ENCODE measurements at regions of chr19 and their contacts with region 1.

Region 1: GRCh38 chr19:12064590-12065538 is at the start of gene ZNF844:
- DNase-seq: peak; percentile 93
- CTCF ChIP-seq: no peak

Region 2: DNA sequence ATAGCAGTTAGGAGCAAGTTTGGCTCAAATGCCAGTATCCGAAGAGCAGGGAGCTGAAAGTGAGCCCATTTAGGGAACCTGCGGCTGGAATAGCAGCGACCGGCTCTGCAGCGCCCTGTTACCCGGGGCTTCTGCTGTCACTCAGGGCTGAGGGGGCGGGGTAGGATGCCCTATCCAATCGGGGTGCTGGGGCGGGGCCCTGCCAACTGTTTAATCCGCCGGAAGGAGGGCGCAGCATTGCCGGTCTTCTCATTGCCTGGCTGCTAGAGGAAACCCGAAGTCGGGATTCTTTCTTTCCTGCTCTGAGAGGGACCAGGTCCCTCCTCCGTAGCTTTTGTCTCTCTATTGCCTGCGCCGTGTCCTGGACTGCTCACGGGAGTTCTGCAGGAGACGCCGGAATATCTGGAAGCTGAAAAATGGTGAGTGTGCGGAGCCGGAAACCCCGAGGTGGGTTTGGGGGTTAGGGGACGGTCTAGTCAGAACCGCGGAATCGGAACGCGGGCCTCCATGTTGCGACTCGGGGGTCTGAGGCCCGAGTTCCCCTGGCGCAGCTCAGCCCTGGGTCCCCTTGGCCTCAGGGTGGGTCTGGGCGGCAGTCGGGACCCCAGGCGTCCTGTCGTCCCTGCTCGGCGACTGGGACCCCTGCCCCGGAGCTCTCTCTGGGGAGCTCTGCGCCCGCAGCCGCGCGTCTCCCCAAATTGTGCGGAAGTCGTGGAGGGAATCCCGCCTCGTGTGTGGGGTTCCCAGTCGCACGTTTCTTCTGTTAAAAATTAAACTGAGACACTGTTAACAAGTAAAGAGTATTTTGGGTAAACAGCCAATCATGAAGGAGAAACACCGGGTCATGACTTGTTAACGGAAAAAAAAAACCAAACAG is 77.2 kb before region 1 on chr19:
- CTCF ChIA-PET with region 1: interaction called, 12 read pairs
- POLR2A ChIA-PET with region 1: no interaction called
- DNase-seq: peak; percentile 92
- CTCF ChIP-seq: no peak

Region 3: DNA sequence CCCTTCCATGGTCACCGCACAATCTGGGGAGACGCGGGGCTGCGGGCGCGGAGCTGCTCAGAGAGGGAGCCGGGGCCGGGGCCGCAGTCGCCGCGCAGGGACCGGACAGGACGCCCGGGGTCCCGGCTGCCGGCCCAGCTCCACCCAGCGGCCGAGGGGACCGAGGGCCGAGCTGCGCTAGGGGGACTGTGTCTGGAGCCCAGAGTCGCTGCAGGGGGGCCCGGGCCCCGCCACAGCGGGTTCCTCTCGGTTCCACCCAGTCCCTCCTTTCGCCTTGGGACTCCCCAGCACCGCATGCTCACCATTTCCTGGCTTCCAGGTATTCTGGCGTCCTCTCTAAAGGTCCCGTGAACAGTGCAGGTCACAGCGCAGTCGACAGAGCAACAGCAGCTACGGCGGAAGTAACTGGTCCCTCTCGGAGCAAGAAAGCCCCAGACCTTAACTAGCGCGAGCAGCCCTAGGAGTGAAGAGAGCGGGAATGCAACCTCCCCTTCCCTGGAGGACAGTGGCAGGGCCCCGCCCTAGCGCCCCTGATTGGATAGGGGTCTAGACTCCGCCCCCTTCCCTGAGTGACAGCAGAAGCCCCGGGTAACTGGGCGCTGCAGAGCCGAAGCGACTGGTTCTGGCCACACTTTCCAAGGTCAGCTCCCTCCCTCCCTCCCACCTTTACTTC is 12.2 kb before region 1 on chr19 and contains the start of gene ZNF878:
- CTCF ChIA-PET with region 1: interaction called, 17 read pairs
- POLR2A ChIA-PET with region 1: interaction called, 3 read pairs
- DNase-seq: peak; percentile 87
- CTCF ChIP-seq: peak; percentile 35

Region 4: GRCh38 chr19:12092065-12092867 is 27.4 kb after region 1 on chr19:
- CTCF ChIA-PET with region 1: interaction called, 47 read pairs
- POLR2A ChIA-PET with region 1: no interaction called
- DNase-seq: peak; percentile 91
- CTCF ChIP-seq: no peak

Region 5: DNA sequence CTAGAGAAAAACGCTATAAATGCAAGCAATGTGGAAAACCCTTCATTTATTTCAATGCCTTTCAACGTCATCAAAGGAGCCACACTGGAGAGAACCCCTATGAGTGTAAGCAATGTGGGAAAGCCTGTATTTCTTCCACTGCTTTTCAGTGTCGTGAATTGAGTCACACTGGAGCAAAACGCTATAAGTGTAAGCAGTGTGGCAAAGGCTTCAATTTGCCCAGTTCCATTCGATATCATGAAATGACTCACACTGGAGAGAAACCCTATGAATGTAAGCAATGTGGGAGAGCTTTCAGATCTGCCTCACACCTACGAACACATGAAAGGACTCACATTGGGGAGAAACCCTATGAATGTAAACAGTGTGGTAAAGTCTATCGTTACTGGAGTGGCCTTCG is 47.8 kb after region 1 on chr19:
- CTCF ChIA-PET with region 1: no interaction called
- POLR2A ChIA-PET with region 1: no interaction called
- DNase-seq: no peak
- CTCF ChIP-seq: no peak

Region 6: GRCh38 chr19:12610540-12611360 is 545.9 kb after region 1 on chr19 and contains the starts of genes ZNF490 and ZNF791:
- CTCF ChIA-PET with region 1: no interaction called
- POLR2A ChIA-PET with region 1: interaction called, 10 read pairs
- DNase-seq: peak; percentile 96
- CTCF ChIP-seq: no peak